PC-9 (cell line): ENCODE measurements at regions of chr2 and their contacts with region 1.

Region 1: DNA sequence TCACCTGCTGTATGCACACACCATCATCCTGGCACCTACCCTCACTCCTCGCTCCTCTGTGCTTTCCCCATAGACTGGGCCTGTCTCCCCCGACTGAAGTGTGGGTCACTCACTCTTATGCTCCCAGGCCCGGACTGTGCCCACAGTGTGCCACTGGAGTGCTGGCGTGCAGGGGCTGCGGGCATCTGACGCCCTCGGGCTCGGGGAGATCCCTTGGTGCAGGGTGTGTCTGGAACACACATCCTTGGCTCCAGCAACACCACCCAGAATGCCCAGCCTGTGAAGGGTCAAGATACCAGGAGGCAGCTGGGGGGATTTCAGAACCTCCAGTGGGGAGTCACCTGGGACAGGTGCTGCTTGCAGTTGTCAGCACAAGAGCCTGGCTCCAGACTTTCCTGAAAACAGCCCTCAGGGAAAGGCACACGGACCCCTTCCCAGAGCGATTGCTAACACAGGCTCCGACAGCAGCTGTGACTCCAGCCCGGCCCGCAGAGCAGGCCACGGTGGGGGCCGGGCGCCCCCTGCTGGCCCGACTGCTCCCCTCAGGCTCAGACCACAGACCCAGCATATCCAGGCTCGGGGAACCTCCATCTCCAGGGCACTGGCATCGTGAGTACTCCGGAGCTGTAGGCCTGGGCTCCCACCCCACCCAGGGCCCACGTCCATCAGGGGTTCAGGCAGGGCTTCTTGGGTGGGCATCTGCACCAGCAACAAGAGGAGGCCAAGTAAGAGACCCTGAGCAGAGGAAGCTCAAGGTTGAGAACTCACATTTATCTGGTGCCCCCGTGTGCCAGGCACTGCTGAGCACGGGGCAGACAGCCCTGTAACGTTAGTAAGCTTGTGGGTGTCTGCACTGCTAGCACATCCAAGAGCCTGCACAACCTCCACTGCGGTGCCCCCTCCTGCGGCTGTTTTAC is 8.6 kb downstream of the HS1BP3 start:
- DNase-seq: peak; percentile 51 to 78
- H3K4me3 ChIP-seq: no peak overlapping the region
- H3K27ac ChIP-seq: no peak overlapping the region
- H3K4me1 ChIP-seq: no peaks in the 10 kb centered on the region
- H3K27me3 ChIP-seq: no peaks in the 10 kb centered on the region
- CTCF ChIP-seq: peak; percentile 96

Region 2: GRCh38 chr2:20106746-20107145 is 535.6 kb before region 1 on chr2:
- CTCF ChIA-PET with region 1: no interaction called
- POLR2A ChIA-PET with region 1: no interaction called
- intact Hi-C with region 1: loop called (anchors 10 kb)
- DNase-seq: peak; percentile 70 to 83
- H3K4me3 ChIP-seq: peak overlapping the region; percentile 68
- H3K27ac ChIP-seq: peak overlapping the region; percentile 32; the same call in 1 of the 2 replicates
- H3K4me1 ChIP-seq: peaks cover 45% of the 10 kb centered on the region
- H3K27me3 ChIP-seq: no peaks in the 10 kb centered on the region
- CTCF ChIP-seq: peak; percentile 92

Region 3: GRCh38 chr2:20326163-20326780 is 316.0 kb before region 1 on chr2:
- CTCF ChIA-PET with region 1: no interaction called
- POLR2A ChIA-PET with region 1: no interaction called
- intact Hi-C with region 1: loop called (anchors 5 kb)
- DNase-seq: peak in 1 of 2 experiments; percentile 25
- H3K4me3 ChIP-seq: no peak overlapping the region
- H3K27ac ChIP-seq: peak overlapping the region; percentile 86
- H3K4me1 ChIP-seq: peaks cover 48% of the 10 kb centered on the region
- H3K27me3 ChIP-seq: no peaks in the 10 kb centered on the region
- CTCF ChIP-seq: peak; percentile 84

Region 4: DNA sequence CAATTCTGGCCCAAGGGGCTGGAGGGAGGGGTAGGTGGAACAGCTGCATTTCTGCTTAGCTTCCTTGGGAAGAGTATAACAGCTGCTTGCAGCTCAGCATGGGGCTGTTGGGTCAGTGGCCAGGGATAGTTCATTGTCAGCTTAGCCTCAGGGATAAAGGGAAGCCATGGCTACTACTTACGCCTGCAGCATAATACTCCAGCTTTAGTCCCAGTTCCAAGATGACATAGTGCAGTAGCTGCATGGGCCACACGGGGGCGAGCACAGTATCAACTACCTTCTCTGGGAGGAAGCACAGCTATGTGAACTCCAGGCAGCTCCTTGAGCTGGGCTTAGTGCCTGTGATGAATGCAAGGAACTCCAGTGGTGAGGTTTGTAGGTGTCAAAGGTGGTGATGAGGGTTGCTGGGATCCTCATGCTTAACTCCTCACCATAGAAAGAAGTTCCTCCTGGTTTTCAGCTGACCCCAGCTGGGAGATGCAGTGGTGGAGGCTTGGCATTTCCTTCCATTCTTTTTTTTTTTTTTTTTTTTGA is 230.9 kb before region 1 on chr2:
- CTCF ChIA-PET with region 1: interaction called, 5 read pairs
- POLR2A ChIA-PET with region 1: no interaction called
- intact Hi-C with region 1: loop called (anchors 2 kb)
- DNase-seq: peak; percentile 68 to 83
- H3K4me3 ChIP-seq: no peak overlapping the region
- H3K27ac ChIP-seq: no peak overlapping the region
- H3K4me1 ChIP-seq: no peaks in the 10 kb centered on the region
- H3K27me3 ChIP-seq: no peaks in the 10 kb centered on the region
- CTCF ChIP-seq: peak; percentile 92